CD14-positive monocyte (primary cell): ENCODE measurements at regions of chr2 and their contacts with region 1.

Region 1: GRCh38 chr2:226137201-226137811 is 662.3 kb downstream of the IRS1 start:
- DNase-seq: peak; percentile 58 to 81 (median 75)
- H3K4me3 ChIP-seq: peak overlapping the region in 1 of 3 experiments; percentile 33
- H3K4me3 Mint-ChIP-seq: peak overlapping the region; percentile 26 to 32
- H3K27ac ChIP-seq: peak overlapping the region; percentile 96 to 97
- H3K27ac Mint-ChIP-seq: peak overlapping the region; percentile 90 to 98 (median 96)
- H3K4me1 ChIP-seq: peaks cover 57 to 70% of the 10 kb centered on the region in 2 donors
- H3K4me1 Mint-ChIP-seq: peaks cover 62% of the 10 kb centered on the region
- H3K27me3 ChIP-seq: no peaks in the 10 kb centered on the region
- H3K27me3 Mint-ChIP-seq: peaks cover 0 to 2% (median 0%) of the 10 kb centered on the region in 3 donors
- CTCF ChIP-seq: no peak

Region 2: DNA sequence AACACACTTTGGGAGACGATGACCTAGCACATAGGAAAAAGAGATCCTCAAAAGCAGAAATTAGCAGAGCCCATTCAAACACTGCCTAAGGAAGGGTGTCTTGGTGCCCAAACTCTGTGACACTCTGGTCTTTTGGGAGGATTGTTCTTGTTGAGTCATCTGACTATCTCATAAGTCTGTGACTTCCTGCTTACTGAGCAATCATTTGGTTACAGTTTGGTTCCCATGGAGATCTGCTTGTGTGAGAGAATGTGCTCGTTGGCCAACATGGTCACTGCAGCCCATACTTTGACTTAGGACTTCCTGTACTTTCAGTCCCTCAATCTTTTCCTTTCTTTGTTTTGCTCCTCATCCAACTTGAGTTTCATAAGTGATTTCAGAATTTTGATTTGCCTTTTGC is 134.9 kb before region 1 on chr2:
- intact Hi-C with region 1: loop called in 1 of 2 experiments (anchors 10 kb)
- DNase-seq: peak; percentile 87 to 99 (median 97)
- H3K4me3 ChIP-seq: peak overlapping the region in 1 of 3 experiments; percentile 13
- H3K4me3 Mint-ChIP-seq: no peak overlapping the region
- H3K27ac ChIP-seq: peak overlapping the region in 1 of 2 donors; percentile 90
- H3K27ac Mint-ChIP-seq: peak overlapping the region; percentile 72 to 97 (median 92)
- H3K4me1 ChIP-seq: peaks cover 14 to 16% of the 10 kb centered on the region in 2 donors
- H3K4me1 Mint-ChIP-seq: peaks cover 14% of the 10 kb centered on the region
- H3K27me3 ChIP-seq: no peaks in the 10 kb centered on the region
- H3K27me3 Mint-ChIP-seq: no peaks in the 10 kb centered on the region
- CTCF ChIP-seq: no peak

Region 3: GRCh38 chr2:226030788-226031646 is 106.3 kb before region 1 on chr2:
- intact Hi-C with region 1: loop called (anchors 5 to 10 kb)
- DNase-seq: peak; percentile 43 to 52 (median 51)
- H3K4me3 ChIP-seq: peak overlapping the region; percentile 42 to 88 (median 51)
- H3K4me3 Mint-ChIP-seq: peak overlapping the region; percentile 88 to 96
- H3K27ac ChIP-seq: peak overlapping the region; percentile 97
- H3K27ac Mint-ChIP-seq: peak overlapping the region; percentile 93 to 98 (median 98)
- H3K4me1 ChIP-seq: peaks cover 25 to 35% of the 10 kb centered on the region in 2 donors
- H3K4me1 Mint-ChIP-seq: peaks cover 31% of the 10 kb centered on the region
- H3K27me3 ChIP-seq: no peaks in the 10 kb centered on the region
- H3K27me3 Mint-ChIP-seq: peaks cover 0 to 4% (median 0%) of the 10 kb centered on the region in 3 donors
- CTCF ChIP-seq: no peak

Region 4: GRCh38 chr2:226423498-226423960 is 286.2 kb after region 1 on chr2:
- intact Hi-C with region 1: loop called in 1 of 2 experiments (anchors 10 kb)
- DNase-seq: peak; percentile 85 to 94 (median 93)
- H3K4me3 ChIP-seq: peak overlapping the region in 1 of 3 experiments; percentile 59
- H3K4me3 Mint-ChIP-seq: peak overlapping the region; percentile 7 to 79
- H3K27ac ChIP-seq: peak overlapping the region; percentile 77 to 91
- H3K27ac Mint-ChIP-seq: peak overlapping the region; percentile 88 to 95 (median 90)
- H3K4me1 ChIP-seq: peaks cover 56 to 72% of the 10 kb centered on the region in 2 donors
- H3K4me1 Mint-ChIP-seq: peaks cover 64% of the 10 kb centered on the region
- H3K27me3 ChIP-seq: no peaks in the 10 kb centered on the region
- H3K27me3 Mint-ChIP-seq: no peaks in the 10 kb centered on the region
- CTCF ChIP-seq: no peak